ENCODE measurements at regions of chr3 and their contacts with region 1.

Region 1: GRCh38 chr3:129058441-129059200 is 2.0 kb upstream of the GP9 start:
- DNase-seq: peak; percentile 73 to 84
- H3K4me3 ChIP-seq: no peak overlapping the region
- H3K27ac ChIP-seq: peak overlapping the region in 1 of 3 donors; percentile 27
- H3K4me1 ChIP-seq: peaks cover 15 to 20% of the 10 kb centered on the region in 2 donors
- H3K27me3 ChIP-seq: no peaks in the 10 kb centered on the region
- CTCF ChIP-seq: no peak
- POLR2A ChIP-seq: no peak

Region 2: DNA sequence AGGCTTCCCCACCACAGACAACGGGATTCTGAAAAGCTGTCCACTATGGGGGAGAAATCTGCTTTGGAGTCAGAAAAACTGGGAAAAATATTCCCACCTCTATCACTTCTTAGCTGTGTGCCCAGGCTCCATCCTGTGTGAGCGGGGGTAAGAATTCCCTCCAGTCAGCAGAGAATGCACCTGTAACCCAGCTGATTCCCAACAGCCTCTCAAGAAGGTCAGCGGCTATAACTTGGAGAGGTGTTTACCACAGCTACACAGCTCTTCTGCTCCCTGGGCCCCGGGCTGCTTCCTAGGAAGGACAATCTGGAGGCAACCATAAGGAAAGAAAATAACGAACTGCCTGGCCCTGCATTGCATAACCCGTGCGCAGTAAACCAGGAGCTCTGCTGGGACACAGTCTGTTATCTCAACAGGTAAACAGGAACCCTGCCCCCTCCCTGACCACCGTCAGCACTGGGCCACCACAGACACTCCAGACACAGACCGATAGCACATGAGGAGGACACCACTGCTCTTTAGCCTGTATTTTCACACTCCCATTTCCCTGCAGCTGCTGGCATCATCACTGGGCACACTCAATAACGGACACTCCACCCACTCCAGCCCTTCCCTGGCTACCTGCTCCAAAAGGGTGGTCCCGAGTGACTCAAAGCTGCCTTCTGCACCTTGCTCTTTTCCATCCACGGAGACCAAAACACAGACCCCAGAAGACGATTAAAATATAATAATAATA is 60.9 kb after region 1 on chr3:
- intact Hi-C with region 1: loop called (anchors 5 kb)
- DNase-seq: peak; percentile 47 to 54
- H3K4me3 ChIP-seq: peak overlapping the region in 2 of 3 donors; percentile 80 to 87
- H3K27ac ChIP-seq: peak overlapping the region; percentile 84 to 95 (median 94)
- H3K4me1 ChIP-seq: peaks cover 46 to 56% of the 10 kb centered on the region in 2 donors
- H3K27me3 ChIP-seq: no peaks in the 10 kb centered on the region
- CTCF ChIP-seq: no peak
- POLR2A ChIP-seq: peak in 1 of 2 donors; percentile 22

Region 3: DNA sequence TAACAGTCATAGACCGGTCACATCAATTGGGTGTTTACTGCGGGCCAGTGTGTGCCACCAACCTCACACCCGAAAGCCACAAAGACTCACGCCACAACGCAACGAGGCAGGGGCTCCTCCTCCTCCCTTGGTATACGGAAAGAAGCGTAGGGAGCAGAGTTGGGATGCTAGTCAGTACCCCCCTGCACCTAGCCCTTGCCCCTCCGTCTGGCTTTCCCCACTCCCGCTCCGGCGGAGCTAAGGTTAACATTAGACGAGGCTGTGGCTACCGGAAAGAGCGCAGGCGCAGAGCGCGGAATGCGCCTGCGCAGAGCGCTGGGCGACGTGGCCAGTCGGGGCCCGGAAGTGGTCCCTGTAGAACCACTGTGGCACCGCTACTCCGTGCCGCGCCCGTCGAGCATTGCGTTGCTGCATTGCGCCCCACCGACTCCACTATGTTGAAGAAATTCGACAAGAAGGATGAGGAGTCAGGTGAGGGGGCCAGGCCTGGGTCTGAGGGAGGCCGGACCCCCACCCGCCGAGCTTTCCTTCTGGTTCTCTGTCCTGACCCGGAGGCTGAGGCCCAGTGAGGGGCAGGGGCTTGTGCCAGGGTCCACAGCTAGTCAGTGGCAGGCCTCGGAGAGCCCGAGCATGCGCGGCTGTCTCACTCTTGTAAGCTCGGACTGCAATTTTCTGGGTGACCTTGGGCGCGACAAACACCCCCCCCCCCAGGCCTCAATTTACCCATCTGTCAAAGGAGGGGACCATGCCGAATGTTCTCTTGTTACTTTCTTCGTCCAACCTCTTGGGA is 190.8 kb after region 1 on chr3 and contains the start of gene COPG1:
- intact Hi-C with region 1: loop called (anchors 10 kb)
- DNase-seq: peak; percentile 84
- H3K4me3 ChIP-seq: peak within 1 kb of the TSS; percentile 48 to 97 (median 68)
- H3K27ac ChIP-seq: peak within 1 kb of the TSS; percentile 37 to 87 (median 78)
- H3K4me1 ChIP-seq: peaks cover 20 to 27% of the 10 kb centered on the region in 2 donors
- H3K27me3 ChIP-seq: no peaks in the 10 kb centered on the region
- CTCF ChIP-seq: no peak
- POLR2A ChIP-seq: peak; percentile 85 to 93
- total RNA-seq, gene COPG1: 95.8 to 195 (median 159) TPM